PC-3 (cell line): ENCODE measurements at regions of chr4 and their contacts with region 1.

Region 1: DNA sequence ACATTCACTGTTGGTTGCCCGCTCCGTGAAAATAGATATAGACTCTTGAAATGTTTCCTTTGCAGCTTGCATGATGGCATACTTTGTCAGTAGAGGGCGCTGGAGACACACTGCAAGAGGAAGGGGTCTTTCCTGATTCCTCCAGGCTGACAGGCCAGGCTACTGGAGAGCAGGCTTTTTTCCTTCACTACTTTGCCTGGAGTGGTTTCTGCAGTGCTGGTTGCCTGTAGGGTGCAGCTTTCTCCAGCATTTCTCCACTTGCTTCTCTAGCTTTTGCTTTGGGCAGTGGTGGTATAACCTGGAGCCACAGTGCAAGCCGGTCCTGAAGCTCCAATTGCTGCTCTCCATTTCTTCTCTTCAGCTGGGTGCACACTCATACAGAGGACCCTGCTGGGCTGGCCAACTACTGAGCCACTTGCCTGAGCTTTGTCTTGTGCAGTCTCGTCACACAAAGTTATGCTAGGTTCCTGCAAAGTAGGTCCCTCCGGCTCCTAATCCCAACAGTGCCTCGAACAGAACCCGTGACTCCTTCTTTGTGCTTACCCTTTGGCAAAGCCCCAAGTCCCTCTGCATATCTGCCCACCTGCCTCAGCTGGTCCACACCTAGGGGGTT is 46.3 kb downstream of the RASSF6 start:
- DNase-seq: peak; percentile 91
- ATAC-seq: peak; percentile 96
- H3K4me3 ChIP-seq: no peak overlapping the region
- H3K27ac ChIP-seq: no peak overlapping the region
- H3K4me1 ChIP-seq: no peaks in the 10 kb centered on the region; the same call in 1 of the 2 replicates
- H3K27me3 ChIP-seq: no peaks in the 10 kb centered on the region
- CTCF ChIP-seq: peak; percentile 98

Region 2: DNA sequence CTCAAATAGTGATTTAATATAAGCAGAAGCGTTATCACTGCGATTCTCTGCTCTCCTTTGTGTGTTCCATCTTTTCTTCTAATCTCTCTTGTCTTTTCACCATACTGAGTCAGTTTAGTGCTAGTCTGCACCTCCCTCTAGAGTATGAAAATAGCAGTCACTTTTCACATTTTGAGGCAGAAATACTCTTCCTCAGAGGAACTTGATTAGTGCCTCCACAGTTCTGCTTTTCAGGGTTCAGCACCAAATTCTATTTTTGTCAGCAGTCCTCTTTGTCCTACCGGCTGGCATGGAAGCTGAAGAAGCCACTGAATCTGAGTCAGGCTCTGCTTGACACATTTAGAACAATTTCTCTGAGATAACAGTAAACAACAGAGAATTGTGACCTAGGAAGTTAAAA is 265.6 kb before region 1 on chr4:
- CTCF ChIA-PET with region 1: no interaction called
- POLR2A ChIA-PET with region 1: no interaction called
- intact Hi-C with region 1: loop called (anchors 10 kb)
- DNase-seq: peak; percentile 53
- ATAC-seq: peak; percentile 69
- H3K4me3 ChIP-seq: no peak overlapping the region
- H3K27ac ChIP-seq: no peak overlapping the region
- H3K4me1 ChIP-seq: peaks cover 11% of the 10 kb centered on the region
- H3K27me3 ChIP-seq: no peaks in the 10 kb centered on the region
- CTCF ChIP-seq: peak; percentile 60; the same call in 1 of the 2 replicates

Region 3: DNA sequence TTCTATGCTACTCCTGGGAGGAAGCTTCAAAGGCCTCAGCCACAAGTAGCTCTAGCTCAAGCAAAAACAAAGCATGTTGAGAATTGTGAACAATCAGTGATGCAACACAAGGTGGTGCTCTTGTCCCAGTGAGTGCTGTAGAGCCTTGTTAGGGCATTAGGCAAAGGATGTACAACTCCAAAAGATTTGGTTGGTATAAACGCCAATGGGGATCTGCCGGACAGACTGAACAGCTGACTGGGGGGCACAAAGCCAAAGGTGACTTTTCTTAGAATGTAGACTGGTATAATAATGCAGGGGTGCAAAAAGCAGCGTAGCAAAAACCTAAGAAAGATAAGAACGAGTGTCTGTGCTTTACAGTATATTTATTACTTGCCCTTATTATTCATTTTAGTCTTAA is 232.4 kb before region 1 on chr4:
- CTCF ChIA-PET with region 1: no interaction called
- POLR2A ChIA-PET with region 1: no interaction called
- intact Hi-C with region 1: loop called (anchors 5 kb)
- DNase-seq: peak; percentile 77
- ATAC-seq: peak; percentile 96
- H3K4me3 ChIP-seq: no peak overlapping the region
- H3K27ac ChIP-seq: no peak overlapping the region
- H3K4me1 ChIP-seq: no peaks in the 10 kb centered on the region
- H3K27me3 ChIP-seq: no peaks in the 10 kb centered on the region
- CTCF ChIP-seq: peak; percentile 82

Region 4: DNA sequence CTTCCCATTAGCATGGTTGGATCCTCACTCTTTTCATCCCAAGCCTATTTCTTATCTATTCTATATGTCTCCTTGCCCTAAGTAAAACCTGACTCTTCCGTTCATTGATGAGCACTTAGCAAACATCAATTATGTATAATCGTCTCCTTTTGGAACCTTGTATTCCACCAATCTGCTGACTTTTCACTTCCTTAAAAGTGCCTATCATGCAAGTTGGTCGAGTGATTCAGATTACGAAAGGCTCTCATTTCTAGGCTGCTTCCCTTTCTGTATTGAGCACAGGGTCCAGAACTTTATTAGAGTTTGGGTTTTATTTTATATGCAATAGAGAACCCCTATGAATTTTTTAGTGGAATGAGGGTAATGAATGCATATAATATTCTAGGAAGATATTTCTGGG is 196.9 kb before region 1 on chr4:
- CTCF ChIA-PET with region 1: no interaction called
- POLR2A ChIA-PET with region 1: no interaction called
- intact Hi-C with region 1: no loop called
- DNase-seq: no peak
- ATAC-seq: no peak
- H3K4me3 ChIP-seq: no peak overlapping the region
- H3K27ac ChIP-seq: no peak overlapping the region
- H3K4me1 ChIP-seq: no peaks in the 10 kb centered on the region
- H3K27me3 ChIP-seq: peaks cover 46% of the 10 kb centered on the region
- CTCF ChIP-seq: no peak

Region 5: DNA sequence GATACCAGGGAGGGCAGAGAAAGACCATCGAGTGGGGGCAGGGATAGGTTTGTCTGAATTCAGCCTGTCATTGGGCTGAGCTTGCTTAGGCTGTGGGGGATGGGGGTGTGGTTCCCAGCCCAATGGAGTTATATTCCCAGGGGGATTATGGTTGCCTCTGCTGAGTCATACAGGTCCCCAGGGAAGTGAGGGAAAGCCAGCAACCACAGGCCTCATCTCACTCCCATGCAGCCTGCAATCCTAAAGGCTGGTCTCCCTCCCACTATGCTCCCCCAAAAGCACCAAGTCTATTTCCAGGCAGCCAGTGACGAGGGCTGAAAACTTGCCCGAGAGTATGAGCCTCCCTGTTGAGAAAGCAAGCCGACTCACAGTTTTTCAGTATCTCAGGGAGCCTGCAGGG is 53.1 kb before region 1 on chr4:
- CTCF ChIA-PET with region 1: interaction called, 4 read pairs
- POLR2A ChIA-PET with region 1: no interaction called
- intact Hi-C with region 1: loop called (anchors 1 kb)
- DNase-seq: peak; percentile 48
- ATAC-seq: no peak; the same call in 1 of the 2 replicates
- H3K4me3 ChIP-seq: no peak overlapping the region
- H3K27ac ChIP-seq: no peak overlapping the region; the same call in 1 of the 2 replicates
- H3K4me1 ChIP-seq: peaks cover 12% of the 10 kb centered on the region
- H3K27me3 ChIP-seq: no peaks in the 10 kb centered on the region
- CTCF ChIP-seq: no peak

Region 6: DNA sequence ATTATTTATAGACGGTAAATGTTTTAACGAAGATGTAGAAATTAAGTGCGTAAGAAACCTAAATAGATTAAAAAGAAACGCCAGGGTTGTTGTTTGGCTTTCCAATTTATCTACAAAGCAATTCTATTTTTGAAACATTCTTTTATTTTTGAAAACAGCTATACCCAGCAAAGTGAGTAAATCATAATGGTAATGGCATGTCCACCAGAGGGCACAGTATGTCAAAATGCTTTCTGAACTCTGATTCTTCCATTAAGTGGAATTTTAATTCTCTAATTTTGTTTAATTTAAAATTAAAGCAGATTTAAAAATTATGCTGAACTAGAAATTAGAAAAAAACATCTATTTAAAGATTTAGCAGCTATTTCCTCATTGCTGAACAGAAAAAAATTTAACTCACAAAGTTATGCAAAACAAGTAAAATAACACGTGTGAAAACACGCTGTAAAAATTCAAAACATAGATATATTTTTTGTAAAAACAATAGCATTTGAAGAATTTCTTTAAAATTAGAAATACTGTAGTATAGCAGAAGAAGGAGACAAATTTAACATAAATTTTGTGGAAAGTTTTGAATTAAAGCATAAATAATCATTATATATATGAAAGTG is 19.8 kb after region 1 on chr4:
- CTCF ChIA-PET with region 1: interaction called, 6 read pairs
- POLR2A ChIA-PET with region 1: interaction called, 4 read pairs
- intact Hi-C with region 1: loop called (anchors 1 kb)
- DNase-seq: peak; percentile 76
- ATAC-seq: 0 out of 2 replicates have a peak, but pooled peaks have one; percentile 35
- H3K4me3 ChIP-seq: no peak overlapping the region
- H3K27ac ChIP-seq: no peak overlapping the region
- H3K4me1 ChIP-seq: peaks cover 15% of the 10 kb centered on the region
- H3K27me3 ChIP-seq: no peaks in the 10 kb centered on the region
- CTCF ChIP-seq: peak; percentile 92

Region 7: DNA sequence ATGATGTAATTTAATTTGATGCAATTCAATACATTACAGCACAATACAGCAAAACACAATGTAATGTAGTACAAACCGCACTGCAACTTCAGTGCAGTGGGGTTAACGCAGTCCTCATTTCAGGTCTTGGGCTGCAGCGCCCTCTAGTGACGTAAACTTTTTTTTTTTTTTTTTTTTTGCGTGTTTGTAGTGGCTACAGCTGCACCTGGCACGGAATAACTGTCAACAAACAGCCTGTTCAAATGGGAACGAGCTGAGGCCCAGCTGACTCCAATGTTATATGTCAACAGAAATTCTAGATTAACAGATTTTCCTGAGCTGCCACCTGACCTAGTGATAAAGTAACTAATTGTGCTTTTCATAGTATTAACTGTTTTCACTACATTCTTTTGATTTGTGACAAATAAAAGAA is 79.8 kb after region 1 on chr4:
- CTCF ChIA-PET with region 1: interaction called, 17 read pairs
- POLR2A ChIA-PET with region 1: no interaction called
- intact Hi-C with region 1: loop called (anchors 1 kb)
- DNase-seq: peak; percentile 90
- ATAC-seq: peak; percentile 74
- H3K4me3 ChIP-seq: no peak overlapping the region
- H3K27ac ChIP-seq: no peak overlapping the region
- H3K4me1 ChIP-seq: no peaks in the 10 kb centered on the region
- H3K27me3 ChIP-seq: no peaks in the 10 kb centered on the region
- CTCF ChIP-seq: peak; percentile 86